GM18951 (cell line): ENCODE measurements at regions of chr1 and their contacts with region 1.

Region 1: DNA sequence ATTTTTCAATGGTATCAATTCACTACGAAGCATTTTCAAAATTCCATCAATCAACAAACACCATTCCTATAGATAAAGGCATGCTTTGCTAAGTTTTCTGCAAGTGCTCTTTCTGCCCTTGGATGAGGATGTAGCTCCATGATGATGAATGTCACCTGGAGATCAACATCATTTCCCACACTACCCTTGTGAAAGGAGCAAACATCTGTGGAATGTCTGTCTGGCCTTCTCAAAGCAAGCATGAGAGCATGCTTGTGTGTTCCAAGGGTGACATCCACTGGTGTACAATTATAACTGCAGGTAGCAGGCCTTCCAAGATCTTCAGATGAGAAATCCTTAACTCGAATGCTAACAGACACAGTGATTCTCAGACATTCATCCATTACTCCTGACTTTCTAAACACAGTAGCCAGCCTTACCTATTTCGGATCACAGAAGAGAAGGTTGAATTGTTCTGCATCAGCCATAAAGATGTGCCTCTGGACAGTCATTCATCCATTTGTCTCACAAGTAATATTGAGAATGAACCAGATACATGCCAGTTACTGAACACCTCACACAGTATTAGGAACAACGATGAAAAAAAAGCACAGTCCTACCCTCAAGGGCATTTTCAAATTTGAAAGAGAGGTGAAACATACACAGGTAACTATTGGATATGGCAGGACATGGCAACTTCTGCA is 162.4 kb downstream of the TPR start:
- POLR2A ChIP-seq: no peak

Region 2: GRCh38 chr1:185813401-185813979 is 399.2 kb before region 1 on chr1:
- in situ Hi-C with region 1: loop called (anchors 25 kb)
- POLR2A ChIP-seq: no peak